ENCODE measurements at regions of chr5 and their contacts with region 1.

Region 1: GRCh38 chr5:122515709-122516431 is 203.8 kb downstream of the SNCAIP start:
- DNase-seq: peak; percentile 71
- H3K4me3 ChIP-seq: no peak overlapping the region; a peak in 1 of 4 replicates
- H3K27ac ChIP-seq: no peak overlapping the region
- H3K4me1 ChIP-seq: no peaks in the 10 kb centered on the region
- H3K27me3 ChIP-seq: no peaks in the 10 kb centered on the region
- CTCF ChIP-seq: peak; percentile 83
- EP300 ChIP-seq: no peak
- RAD21 ChIP-seq: peak; percentile 98

Region 2: GRCh38 chr5:121550989-121551388 is 964.9 kb before region 1 on chr5:
- CTCF ChIA-PET with region 1: no interaction called
- POLR2A ChIA-PET with region 1: no interaction called
- DNase-seq: no peak
- H3K4me3 ChIP-seq: no peak overlapping the region
- H3K27ac ChIP-seq: no peak overlapping the region
- H3K4me1 ChIP-seq: no peaks in the 10 kb centered on the region
- H3K27me3 ChIP-seq: no peaks in the 10 kb centered on the region
- CTCF ChIP-seq: no peak
- EP300 ChIP-seq: no peak
- RAD21 ChIP-seq: no peak

Region 3: DNA sequence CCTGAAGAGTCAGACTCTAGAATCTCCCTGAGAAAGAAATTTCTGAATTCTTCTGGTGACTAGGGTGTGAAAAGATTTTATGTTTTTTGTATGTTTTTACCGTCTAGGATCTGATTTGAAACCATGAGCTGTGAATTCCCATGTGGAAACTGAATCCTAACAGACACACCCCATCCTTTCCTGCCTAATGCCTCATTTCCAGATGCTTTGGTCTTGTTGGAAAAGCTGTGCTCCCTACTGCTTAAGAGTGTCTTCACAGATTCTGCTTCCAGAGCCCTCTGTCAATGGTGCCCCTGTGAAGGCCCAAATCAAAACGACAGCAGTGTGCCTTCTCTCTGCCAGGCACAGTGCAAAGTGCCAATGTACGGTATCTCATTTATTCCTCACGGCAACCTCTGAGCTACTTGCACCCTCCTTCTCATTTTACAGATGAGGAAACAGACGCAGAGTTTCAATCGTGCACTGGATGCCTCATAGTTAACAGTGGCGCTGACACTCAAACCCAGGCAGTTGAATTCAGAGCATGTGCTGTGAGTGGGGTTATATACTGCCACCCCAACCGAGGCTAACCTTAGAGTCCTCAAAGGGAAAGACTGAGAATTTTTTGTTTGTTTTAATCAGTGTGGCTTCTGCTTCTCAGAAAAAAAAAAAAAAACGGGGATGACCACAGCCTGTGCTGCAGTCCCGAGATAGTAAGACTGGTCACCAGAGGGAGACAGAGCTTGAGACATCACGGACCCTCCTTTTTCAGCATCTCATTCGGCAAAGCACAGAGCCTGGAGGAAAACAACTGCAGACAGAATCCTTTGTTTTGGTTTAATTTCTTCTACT is 15.4 kb before region 1 on chr5:
- CTCF ChIA-PET with region 1: interaction called, 14 read pairs
- POLR2A ChIA-PET with region 1: no interaction called
- DNase-seq: peak; percentile 59
- H3K4me3 ChIP-seq: no peak overlapping the region; a peak in 1 of 4 replicates
- H3K27ac ChIP-seq: no peak overlapping the region
- H3K4me1 ChIP-seq: peaks cover 0 to 8% of the 10 kb centered on the region in 2 experiments; a peak in 2 of 4 replicates
- H3K27me3 ChIP-seq: no peaks in the 10 kb centered on the region
- CTCF ChIP-seq: peak; percentile 65
- EP300 ChIP-seq: no peak
- RAD21 ChIP-seq: peak; percentile 85

Region 4: DNA sequence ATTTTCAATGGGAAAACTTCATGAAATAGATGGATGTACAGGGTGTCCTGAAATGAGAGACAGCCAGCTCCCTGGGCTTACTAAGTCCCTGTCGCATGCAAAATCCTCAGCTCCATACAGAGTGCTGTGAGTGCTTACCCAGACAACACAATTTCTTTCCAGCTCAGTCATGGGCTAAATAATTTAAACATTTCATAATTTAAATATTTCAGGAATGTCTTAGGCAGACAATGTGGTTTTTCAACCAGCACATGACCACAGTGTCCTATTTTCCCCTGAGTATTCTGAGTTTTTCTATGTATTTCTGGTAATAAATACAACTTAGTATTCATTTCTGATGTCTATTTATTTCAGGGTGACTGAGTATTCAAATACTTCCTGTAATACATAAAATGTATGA is 70.5 kb after region 1 on chr5:
- CTCF ChIA-PET with region 1: no interaction called
- POLR2A ChIA-PET with region 1: no interaction called
- DNase-seq: no peak
- H3K4me3 ChIP-seq: no peak overlapping the region
- H3K27ac ChIP-seq: no peak overlapping the region; a peak in 1 of 4 replicates
- H3K4me1 ChIP-seq: 0 out of 4 replicates have a peak, but pooled peaks cover 0 to 3% of the 10 kb centered on the region in 2 experiments
- H3K27me3 ChIP-seq: no peaks in the 10 kb centered on the region
- CTCF ChIP-seq: no peak
- EP300 ChIP-seq: no peak
- RAD21 ChIP-seq: no peak

Region 5: GRCh38 chr5:123344816-123345426 is 829.1 kb after region 1 on chr5:
- CTCF ChIA-PET with region 1: interaction called, 10 read pairs
- POLR2A ChIA-PET with region 1: no interaction called
- DNase-seq: peak; percentile 12
- H3K4me3 ChIP-seq: no peak overlapping the region; a peak in 1 of 4 replicates
- H3K27ac ChIP-seq: no peak overlapping the region
- H3K4me1 ChIP-seq: peaks cover 0 to 7% of the 10 kb centered on the region in 2 experiments; a peak in 2 of 4 replicates
- H3K27me3 ChIP-seq: no peaks in the 10 kb centered on the region
- CTCF ChIP-seq: peak; percentile 86
- EP300 ChIP-seq: no peak
- RAD21 ChIP-seq: peak; percentile 82